HCT116 (cell line): ENCODE measurements at regions of chr2 and their contacts with region 1.

Region 1: GRCh38 chr2:42777883-42778805 is 14.2 kb upstream of the OXER1 start:
- DNase-seq: no peak
- ATAC-seq: no peak
- H3K4me3 ChIP-seq: no peak overlapping the region
- H3K27ac ChIP-seq: no peak overlapping the region
- H3K4me1 ChIP-seq: no peaks in the 10 kb centered on the region
- H3K27me3 ChIP-seq: no peaks in the 10 kb centered on the region
- CTCF ChIP-seq: no peak
- POLR2A ChIP-seq: no peak
- RAD21 ChIP-seq: no peak

Region 2: DNA sequence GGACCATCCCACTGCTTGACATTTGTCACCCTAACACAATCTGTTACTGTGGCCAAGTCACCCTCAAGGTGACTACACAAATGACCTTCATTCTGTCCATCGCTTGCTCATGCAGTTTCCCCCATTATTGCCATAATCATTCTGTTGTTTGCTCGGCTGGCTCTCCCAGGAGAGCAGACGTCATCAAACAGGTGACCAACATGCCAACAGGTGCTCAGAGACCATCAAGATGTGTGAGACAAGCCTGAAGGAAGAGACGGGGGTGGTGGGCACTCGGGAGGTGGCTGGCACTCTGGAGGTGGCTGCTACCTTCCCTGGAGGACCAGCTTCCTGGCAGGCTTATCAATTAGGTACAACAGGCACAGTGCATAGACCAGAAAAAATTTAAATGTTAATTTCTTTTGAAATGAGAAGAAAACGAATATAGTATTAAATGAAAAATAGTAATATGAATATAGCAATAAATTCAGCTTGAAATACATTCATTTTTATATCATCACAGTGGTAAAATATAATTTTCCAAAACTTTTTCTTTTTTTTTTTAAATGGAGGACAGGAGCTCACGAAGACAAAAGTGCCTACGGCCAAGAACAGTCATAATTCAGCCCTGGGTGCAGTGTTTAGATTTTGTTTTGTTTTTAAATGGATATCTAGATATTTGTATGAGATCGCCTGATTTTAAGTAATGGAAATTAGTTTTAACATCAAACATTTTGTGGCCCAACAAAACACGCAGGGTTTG is 31.1 kb after region 1 on chr2:
- CTCF ChIA-PET with region 1: no interaction called
- POLR2A ChIA-PET with region 1: interaction called, 10 read pairs
- RAD21 ChIA-PET with region 1: no interaction called
- intact Hi-C with region 1: no loop called
- DNase-seq: no peak
- ATAC-seq: no peak
- H3K4me3 ChIP-seq: peak overlapping the region; percentile 42 to 60
- H3K27ac ChIP-seq: peak overlapping the region; percentile 97
- H3K4me1 ChIP-seq: peaks cover 7 to 20% of the 10 kb centered on the region in 2 experiments
- H3K27me3 ChIP-seq: no peaks in the 10 kb centered on the region
- CTCF ChIP-seq: no peak
- POLR2A ChIP-seq: no peak
- RAD21 ChIP-seq: no peak

Region 3: DNA sequence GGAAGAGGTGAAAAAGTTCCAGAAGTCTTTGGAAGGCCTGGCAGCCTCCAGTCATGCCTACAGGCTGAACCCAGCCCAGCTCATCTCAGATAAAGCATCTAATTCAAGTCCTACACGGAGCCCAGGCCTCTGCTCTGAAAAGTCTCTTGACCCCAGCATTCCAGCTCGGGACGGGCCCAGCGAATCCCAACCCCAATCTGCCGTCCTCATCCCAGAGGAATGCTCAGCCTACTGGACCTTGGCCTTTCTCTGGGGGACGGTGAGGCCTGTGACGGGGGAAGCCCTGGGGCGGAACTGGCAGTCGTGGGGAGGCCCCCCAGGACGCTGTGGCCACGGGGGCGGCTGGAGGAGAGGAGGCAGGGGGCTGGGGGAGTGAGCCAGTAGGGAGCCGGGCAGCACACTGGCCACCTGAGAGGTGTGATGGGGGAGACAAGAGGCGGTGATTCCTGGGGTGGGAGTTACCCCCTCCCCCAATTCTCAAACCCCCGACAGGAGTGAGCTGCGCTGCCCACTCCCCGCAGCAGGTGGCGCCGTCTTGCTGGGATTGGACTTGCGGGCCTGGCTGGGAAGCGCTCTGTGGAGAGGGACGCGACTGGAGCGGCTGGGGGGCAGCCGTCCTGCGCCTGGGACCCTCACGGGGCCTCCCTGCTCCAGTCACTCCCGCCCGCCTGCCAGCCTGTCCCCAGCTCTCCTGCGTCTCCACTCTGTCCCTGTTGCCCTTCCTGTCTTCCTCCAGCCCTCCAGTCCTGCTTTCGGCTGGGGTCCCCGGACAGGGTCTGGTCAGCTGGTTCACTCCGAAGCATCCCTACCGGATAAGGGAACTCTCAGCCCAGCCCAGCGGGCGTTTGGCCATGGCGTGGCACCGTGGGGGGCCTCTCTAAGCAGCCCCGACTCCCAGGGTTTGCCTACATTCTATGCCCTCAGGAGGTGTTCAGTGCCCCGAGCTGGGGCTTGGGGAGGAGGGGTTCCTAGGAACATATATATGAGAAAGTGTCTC is 196.9 kb after region 1 on chr2:
- CTCF ChIA-PET with region 1: no interaction called
- POLR2A ChIA-PET with region 1: no interaction called
- RAD21 ChIA-PET with region 1: no interaction called
- intact Hi-C with region 1: no loop called
- DNase-seq: peak; percentile 6
- ATAC-seq: peak; percentile 92
- H3K4me3 ChIP-seq: peak overlapping the region in 1 of 2 experiments; percentile 11; a peak in 1 of 4 replicates
- H3K27ac ChIP-seq: no peak overlapping the region
- H3K4me1 ChIP-seq: peaks cover 0 to 4% of the 10 kb centered on the region in 2 experiments; a peak in 1 of 4 replicates
- H3K27me3 ChIP-seq: no peaks in the 10 kb centered on the region
- CTCF ChIP-seq: peak; percentile 83 to 86 (median 84)
- POLR2A ChIP-seq: no peak
- RAD21 ChIP-seq: peak; percentile 97